ENCODE measurements at regions of chr11 and their contacts with region 1.

Region 1: DNA sequence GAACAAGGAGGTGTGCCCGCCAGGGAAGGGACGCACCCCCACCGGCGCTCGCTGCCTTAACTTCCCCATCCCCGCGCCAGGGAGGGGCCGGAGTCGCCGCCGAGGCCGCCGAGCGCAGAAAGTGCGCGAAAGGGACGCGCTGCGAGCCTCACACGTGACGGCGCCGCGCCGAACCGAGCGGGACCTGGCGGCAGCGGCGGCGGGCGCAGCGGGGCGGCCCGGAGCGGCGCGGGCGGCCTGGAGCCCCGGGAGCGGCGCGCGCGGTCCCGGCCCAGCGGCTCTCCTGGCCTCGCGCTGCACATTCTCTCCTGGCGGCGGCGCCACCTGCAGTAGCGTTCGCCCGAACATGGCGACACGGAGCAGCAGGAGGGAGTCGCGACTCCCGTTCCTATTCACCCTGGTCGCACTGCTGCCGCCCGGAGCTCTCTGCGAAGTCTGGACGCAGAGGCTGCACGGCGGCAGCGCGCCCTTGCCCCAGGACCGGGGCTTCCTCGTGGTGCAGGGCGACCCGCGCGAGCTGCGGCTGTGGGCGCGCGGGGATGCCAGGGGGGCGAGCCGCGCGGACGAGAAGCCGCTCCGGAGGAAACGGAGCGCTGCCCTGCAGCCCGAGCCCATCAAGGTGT is at the start of gene SORL1:
- DNase-seq: peak; percentile 58 to 89 (median 80)
- ATAC-seq: peak; percentile 56
- H3K4me3 ChIP-seq: peak within 1 kb of the TSS; percentile 86 to 91
- H3K4me3 Mint-ChIP-seq: peak within 1 kb of the TSS; percentile 94
- H3K27ac ChIP-seq: peak within 1 kb of the TSS; percentile 74 to 86
- H3K27ac Mint-ChIP-seq: peak within 1 kb of the TSS; percentile 95
- H3K4me1 ChIP-seq: peaks cover 77% of the 10 kb centered on the region
- H3K4me1 Mint-ChIP-seq: peaks cover 89% of the 10 kb centered on the region
- H3K27me3 ChIP-seq: no peaks in the 10 kb centered on the region
- H3K27me3 Mint-ChIP-seq: no peaks in the 10 kb centered on the region
- CTCF ChIP-seq: peak; percentile 33
- total RNA-seq, gene SORL1: 170 TPM

Region 2: DNA sequence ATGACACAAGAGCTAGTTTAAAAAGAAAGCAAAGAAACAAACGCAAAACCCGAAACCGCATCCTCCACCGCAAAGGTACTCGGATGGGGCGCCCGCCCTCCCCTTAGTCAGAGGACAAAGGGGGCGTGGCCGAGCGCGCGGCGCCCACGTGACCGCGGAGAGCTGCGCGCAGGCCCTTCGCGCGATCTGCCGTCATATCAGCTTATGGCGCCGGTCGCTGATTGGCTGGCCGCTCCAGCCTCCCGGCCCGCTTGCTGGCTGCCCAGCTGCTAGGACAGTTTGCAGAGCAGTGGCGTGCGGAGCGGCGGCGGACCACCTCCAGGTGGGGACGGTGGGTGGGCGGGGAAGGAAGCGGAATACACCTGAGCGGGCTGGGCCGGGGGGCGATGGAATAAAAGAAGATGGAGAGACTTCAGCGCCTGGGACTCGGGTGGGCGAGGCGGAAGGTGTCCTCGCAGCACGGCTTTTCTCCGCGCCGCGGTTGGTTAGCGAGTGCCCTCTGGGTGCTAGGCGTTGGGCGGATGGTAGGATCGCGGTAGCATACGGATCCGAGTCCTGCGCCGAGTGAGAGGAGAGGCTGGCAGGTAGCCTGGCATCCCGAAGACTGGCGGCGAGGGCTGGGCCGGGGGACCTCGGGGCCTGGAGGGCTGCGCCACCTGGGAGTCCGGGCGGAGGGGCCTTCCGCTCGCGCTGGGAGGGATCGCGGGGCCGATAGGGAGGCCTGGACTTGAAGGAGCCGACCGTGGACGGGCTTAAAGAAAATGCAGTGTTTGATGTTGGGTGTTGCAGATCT is 159.4 kb before region 1 on chr11 and contains the start of gene SC5D:
- CTCF ChIA-PET with region 1: interaction called, 4 read pairs
- POLR2A ChIA-PET with region 1: interaction called, 15 read pairs
- intact Hi-C with region 1: loop called in 1 of 2 experiments (anchors 2 kb)
- DNase-seq: peak; percentile 86 to 98 (median 95)
- ATAC-seq: peak; percentile 83
- H3K4me3 ChIP-seq: peak within 1 kb of the TSS; percentile 77 to 79
- H3K4me3 Mint-ChIP-seq: peak within 1 kb of the TSS; percentile 97
- H3K27ac ChIP-seq: peak within 1 kb of the TSS; percentile 94 to 97
- H3K27ac Mint-ChIP-seq: peak within 1 kb of the TSS; percentile 99
- H3K4me1 ChIP-seq: peaks cover 14% of the 10 kb centered on the region
- H3K4me1 Mint-ChIP-seq: peaks cover 58% of the 10 kb centered on the region
- H3K27me3 ChIP-seq: no peaks in the 10 kb centered on the region
- H3K27me3 Mint-ChIP-seq: no peaks in the 10 kb centered on the region
- CTCF ChIP-seq: no peak
- total RNA-seq, gene SC5D: 69.2 to 70.1 TPM

Region 3: GRCh38 chr11:121328967-121329679 is 123.0 kb before region 1 on chr11:
- CTCF ChIA-PET with region 1: interaction called, 3 read pairs
- POLR2A ChIA-PET with region 1: interaction called, 14 read pairs
- intact Hi-C with region 1: loop called in 1 of 2 experiments (anchors 5 kb)
- DNase-seq: peak in 2 of 9 experiments; percentile 28 to 43
- ATAC-seq: peak; percentile 45
- H3K4me3 ChIP-seq: no peak overlapping the region
- H3K4me3 Mint-ChIP-seq: no peak overlapping the region
- H3K27ac ChIP-seq: peak overlapping the region in 1 of 2 experiments; percentile 4
- H3K27ac Mint-ChIP-seq: no peak overlapping the region
- H3K4me1 ChIP-seq: peaks cover 23% of the 10 kb centered on the region
- H3K4me1 Mint-ChIP-seq: peaks cover 4% of the 10 kb centered on the region
- H3K27me3 ChIP-seq: no peaks in the 10 kb centered on the region
- H3K27me3 Mint-ChIP-seq: no peaks in the 10 kb centered on the region
- CTCF ChIP-seq: no peak

Region 4: DNA sequence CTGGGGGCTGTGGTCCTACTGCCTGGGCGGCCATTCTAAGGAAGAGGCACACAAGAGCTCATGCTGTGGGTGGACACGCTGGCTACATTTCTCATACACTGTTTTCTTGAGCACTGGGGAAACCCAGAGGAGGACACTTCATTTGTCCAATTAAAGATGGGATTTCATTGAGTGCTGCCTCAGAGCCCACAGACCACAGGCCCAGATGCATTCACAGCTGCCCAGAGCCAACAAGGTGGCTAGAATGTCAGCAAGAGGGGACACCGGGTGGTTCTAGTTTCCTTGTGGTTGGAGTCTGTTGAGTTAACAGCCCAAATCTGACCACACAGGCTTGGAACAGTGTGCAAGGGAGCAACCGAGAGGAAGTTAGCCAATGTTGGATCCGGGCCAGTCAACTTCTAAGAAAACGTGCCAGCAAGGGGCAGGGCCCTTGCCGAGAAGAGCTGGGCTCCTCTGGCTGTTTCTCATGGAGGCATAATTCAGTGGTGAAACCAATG is 35.0 kb before region 1 on chr11:
- CTCF ChIA-PET with region 1: interaction called, 3 read pairs
- POLR2A ChIA-PET with region 1: interaction called, 14 read pairs
- intact Hi-C with region 1: loop called in 1 of 2 experiments (anchors 5 kb)
- DNase-seq: peak; percentile 18 to 73 (median 49)
- ATAC-seq: peak; percentile 30
- H3K4me3 ChIP-seq: no peak overlapping the region
- H3K4me3 Mint-ChIP-seq: peak overlapping the region; percentile 38
- H3K27ac ChIP-seq: peak overlapping the region; percentile 33 to 61
- H3K27ac Mint-ChIP-seq: peak overlapping the region; percentile 87
- H3K4me1 ChIP-seq: peaks cover 57% of the 10 kb centered on the region
- H3K4me1 Mint-ChIP-seq: peaks cover 58% of the 10 kb centered on the region
- H3K27me3 ChIP-seq: no peaks in the 10 kb centered on the region
- H3K27me3 Mint-ChIP-seq: no peaks in the 10 kb centered on the region
- CTCF ChIP-seq: no peak

Region 5: DNA sequence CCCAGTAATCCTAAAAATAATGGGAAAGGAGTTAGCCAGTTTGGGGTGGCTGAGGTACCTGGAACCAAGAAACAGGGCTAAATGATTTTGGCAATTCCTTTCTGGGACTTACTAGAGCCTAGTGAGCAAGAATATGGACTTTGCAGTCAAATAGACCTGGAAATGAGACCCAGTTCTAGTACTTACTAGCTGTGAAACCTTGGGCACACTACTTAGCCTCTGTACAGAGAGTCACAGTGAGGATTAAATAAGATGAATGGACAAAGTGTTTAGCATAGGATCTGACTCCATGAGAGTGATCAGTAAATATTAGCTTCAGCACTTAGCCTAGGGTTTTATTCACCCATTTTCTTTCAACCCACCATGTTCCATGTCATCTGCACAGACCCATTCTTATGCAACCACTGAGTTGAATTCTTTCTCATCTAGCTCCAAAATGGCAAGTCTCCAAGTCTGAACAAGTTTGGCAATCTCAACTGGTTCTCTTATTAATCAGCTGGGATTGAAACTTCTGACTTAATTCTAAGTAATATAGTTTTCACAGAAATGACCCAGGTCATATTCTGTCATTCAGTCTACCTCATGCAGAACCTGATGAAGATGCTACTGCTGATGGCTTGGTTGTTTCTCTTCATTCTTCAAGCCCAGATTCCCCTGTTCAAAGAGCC is 14.9 kb before region 1 on chr11:
- CTCF ChIA-PET with region 1: interaction called, 4 read pairs
- POLR2A ChIA-PET with region 1: interaction called, 12 read pairs
- intact Hi-C with region 1: no loop called
- DNase-seq: no peak
- ATAC-seq: no peak
- H3K4me3 ChIP-seq: no peak overlapping the region
- H3K4me3 Mint-ChIP-seq: no peak overlapping the region
- H3K27ac ChIP-seq: no peak overlapping the region
- H3K27ac Mint-ChIP-seq: peak overlapping the region; percentile 2
- H3K4me1 ChIP-seq: peaks cover 5% of the 10 kb centered on the region
- H3K4me1 Mint-ChIP-seq: peaks cover 46% of the 10 kb centered on the region
- H3K27me3 ChIP-seq: no peaks in the 10 kb centered on the region
- H3K27me3 Mint-ChIP-seq: no peaks in the 10 kb centered on the region
- CTCF ChIP-seq: no peak

Region 6: DNA sequence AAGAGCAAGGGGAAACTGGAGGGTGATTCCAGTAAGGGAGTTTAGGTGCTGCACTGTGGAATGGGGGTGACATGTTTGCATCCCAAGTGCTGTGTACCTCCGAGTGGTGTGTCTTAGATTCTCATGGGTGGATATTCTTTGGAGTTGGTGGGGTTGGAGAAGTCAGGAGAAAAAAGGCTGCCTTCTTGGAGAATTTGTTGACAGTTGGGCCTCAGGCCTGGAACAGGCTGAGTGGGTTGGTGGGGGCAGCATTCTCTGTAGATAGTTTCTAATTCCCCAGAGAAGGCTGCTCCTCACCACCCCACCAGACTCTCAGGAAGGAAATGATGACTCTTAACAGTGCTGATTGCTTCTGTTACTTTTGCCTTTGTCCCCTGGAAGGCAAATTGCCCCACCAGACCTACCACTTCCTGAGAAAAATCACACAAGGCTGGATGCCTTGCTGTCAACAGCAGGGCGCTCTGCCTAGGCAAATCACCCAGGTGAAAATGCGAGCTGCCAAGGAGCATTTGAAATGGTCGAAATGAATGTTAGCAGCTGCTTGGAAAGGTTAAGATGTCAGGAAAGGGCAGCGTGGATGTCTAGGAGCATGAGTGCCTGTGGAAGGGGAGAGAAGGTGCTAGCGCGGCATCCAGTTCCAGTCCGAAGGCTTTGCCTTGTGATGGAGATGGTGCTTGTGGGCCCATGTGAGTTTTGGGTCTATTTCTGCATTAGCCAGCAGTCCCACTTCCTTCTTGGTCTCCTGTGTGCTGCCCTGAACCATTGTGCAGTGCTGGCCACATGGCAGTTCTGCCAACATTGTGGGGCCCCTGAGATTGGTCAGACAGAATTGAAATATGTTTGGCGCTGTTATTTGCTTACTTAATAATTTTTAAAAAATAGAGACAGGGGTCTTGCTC is 30.4 kb after region 1 on chr11:
- CTCF ChIA-PET with region 1: interaction called, 15 read pairs
- POLR2A ChIA-PET with region 1: interaction called, 28 read pairs
- intact Hi-C with region 1: loop called (anchors 1 kb)
- DNase-seq: peak; percentile 37 to 92 (median 74)
- ATAC-seq: peak; percentile 78
- H3K4me3 ChIP-seq: peak overlapping the region; percentile 34 to 44
- H3K4me3 Mint-ChIP-seq: peak overlapping the region; percentile 73
- H3K27ac ChIP-seq: peak overlapping the region; percentile 71 to 92
- H3K27ac Mint-ChIP-seq: peak overlapping the region; percentile 94
- H3K4me1 ChIP-seq: peaks cover 41% of the 10 kb centered on the region
- H3K4me1 Mint-ChIP-seq: peaks cover 77% of the 10 kb centered on the region
- H3K27me3 ChIP-seq: no peaks in the 10 kb centered on the region
- H3K27me3 Mint-ChIP-seq: no peaks in the 10 kb centered on the region
- CTCF ChIP-seq: no peak

Region 7: GRCh38 chr11:121591405-121592033 is 139.4 kb after region 1 on chr11:
- CTCF ChIA-PET with region 1: interaction called, 11 read pairs
- POLR2A ChIA-PET with region 1: interaction called, 7 read pairs
- intact Hi-C with region 1: loop called in 1 of 2 experiments (anchors 1 kb)
- DNase-seq: peak; percentile 40 to 85 (median 69)
- ATAC-seq: peak; percentile 92
- H3K4me3 ChIP-seq: no peak overlapping the region
- H3K4me3 Mint-ChIP-seq: no peak overlapping the region
- H3K27ac ChIP-seq: peak overlapping the region in 1 of 2 experiments; percentile 37
- H3K27ac Mint-ChIP-seq: no peak overlapping the region
- H3K4me1 ChIP-seq: no peaks in the 10 kb centered on the region
- H3K4me1 Mint-ChIP-seq: peaks cover 5% of the 10 kb centered on the region
- H3K27me3 ChIP-seq: no peaks in the 10 kb centered on the region
- H3K27me3 Mint-ChIP-seq: no peaks in the 10 kb centered on the region
- CTCF ChIP-seq: peak; percentile 82

Region 8: DNA sequence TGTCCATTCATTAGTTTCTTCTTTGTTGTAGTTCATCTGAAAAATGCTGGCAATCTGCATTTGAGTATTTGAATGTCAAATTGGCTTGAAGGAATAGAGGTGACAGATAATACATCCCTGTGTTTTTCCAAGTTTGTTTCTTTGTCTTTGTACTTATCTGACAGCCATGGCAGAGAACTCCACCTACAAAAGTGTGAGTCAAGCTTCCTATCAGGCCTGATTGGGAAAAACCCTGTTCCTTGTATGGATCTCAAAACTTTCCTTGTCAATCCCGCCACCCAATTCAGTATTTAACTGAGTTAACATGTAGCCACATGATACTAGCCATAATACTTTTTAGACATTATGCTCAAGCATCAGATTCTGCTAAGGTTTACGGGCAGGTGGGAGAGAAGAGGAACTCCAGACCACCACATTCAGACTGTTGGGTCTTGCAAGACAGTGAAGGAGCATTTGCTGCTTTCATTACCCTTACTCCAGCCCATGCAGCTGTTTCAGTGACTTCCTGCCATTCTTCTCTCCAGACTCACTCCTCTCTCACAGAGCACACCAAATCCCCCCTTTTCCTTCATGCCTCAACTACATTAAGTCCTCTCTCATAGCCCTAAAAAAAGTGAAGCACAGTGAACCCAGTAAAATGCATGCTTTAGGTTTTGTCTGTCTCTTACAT is 598.1 kb after region 1 on chr11:
- CTCF ChIA-PET with region 1: no interaction called
- POLR2A ChIA-PET with region 1: no interaction called
- intact Hi-C with region 1: no loop called
- DNase-seq: no peak
- ATAC-seq: no peak
- H3K4me3 ChIP-seq: no peak overlapping the region
- H3K4me3 Mint-ChIP-seq: no peak overlapping the region
- H3K27ac ChIP-seq: no peak overlapping the region
- H3K27ac Mint-ChIP-seq: no peak overlapping the region
- H3K4me1 ChIP-seq: no peaks in the 10 kb centered on the region
- H3K4me1 Mint-ChIP-seq: no peaks in the 10 kb centered on the region
- H3K27me3 ChIP-seq: no peaks in the 10 kb centered on the region
- H3K27me3 Mint-ChIP-seq: peaks cover 5% of the 10 kb centered on the region
- CTCF ChIP-seq: no peak